H1 (cell line): ENCODE measurements at regions of chr12 and their contacts with region 1.

Region 1: GRCh38 chr12:55738123-55739024 is 4.5 kb upstream of the GDF11 start:
- DNase-seq: peak in 1 of 2 experiments; percentile 88
- H3K4me3 ChIP-seq: peak overlapping the region; percentile 45 to 65 (median 56)
- H3K27ac ChIP-seq: peak overlapping the region; percentile 46; the same call in 1 of the 2 replicates
- H3K4me1 ChIP-seq: peaks cover 2 to 23% (median 10%) of the 10 kb centered on the region in 4 experiments; a peak in 6 of 7 replicates
- H3K27me3 ChIP-seq: no peaks in the 10 kb centered on the region
- CTCF ChIP-seq: peak in 2 of 3 experiments; percentile 70 to 84; a peak in 3 of 4 replicates
- EP300 ChIP-seq: no peak
- POLR2A ChIP-seq: peak in 1 of 2 experiments; percentile 61; a peak in 2 of 3 replicates
- RAD21 ChIP-seq: peak; percentile 91 to 92

Region 2: DNA sequence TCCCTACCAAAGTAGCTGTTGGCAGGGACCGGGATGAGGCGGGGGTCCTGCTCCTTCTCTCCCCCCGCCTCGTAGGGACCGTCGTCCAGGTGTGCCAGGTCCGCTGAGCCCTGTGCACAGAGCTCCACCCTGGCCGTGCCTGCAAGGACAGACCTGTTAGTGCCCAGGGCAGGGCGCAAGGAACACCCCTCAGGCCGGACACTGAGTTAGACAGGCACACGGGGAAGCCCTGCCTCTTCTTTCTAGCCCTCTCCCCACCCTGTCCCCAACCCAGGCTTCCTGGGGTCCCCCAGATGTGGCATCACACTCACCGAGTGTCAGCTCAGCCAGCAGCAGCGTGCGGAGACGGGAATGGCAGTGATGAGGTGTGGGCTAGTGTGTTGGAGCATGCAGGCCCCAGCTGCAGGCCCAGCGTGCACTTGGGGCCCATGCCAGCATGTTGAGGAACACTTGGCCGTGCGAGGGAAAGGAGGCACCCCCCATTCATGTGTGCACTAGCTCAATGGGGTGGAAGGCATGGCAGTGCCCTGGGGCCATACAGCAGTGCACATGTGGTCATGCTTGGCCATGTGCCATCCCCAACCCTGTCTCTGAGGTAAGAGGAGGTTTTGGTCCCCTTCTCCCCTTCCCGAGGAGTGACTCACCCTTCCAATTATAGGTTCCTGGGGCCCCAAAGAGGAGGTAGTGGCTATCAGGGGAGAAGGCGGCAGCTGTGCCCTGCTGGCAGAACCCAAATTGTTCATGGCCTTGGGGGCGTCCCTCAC is 37.9 kb before region 1 on chr12:
- CTCF ChIA-PET with region 1: interaction called, 32 read pairs
- POLR2A ChIA-PET with region 1: interaction called, 9 read pairs
- DNase-seq: no peak
- H3K4me3 ChIP-seq: no peak overlapping the region
- H3K27ac ChIP-seq: no peak overlapping the region
- H3K4me1 ChIP-seq: no peaks in the 10 kb centered on the region; a peak in 1 of 7 replicates
- H3K27me3 ChIP-seq: no peaks in the 10 kb centered on the region
- CTCF ChIP-seq: no peak
- EP300 ChIP-seq: no peak
- POLR2A ChIP-seq: no peak
- RAD21 ChIP-seq: no peak

Region 3: DNA sequence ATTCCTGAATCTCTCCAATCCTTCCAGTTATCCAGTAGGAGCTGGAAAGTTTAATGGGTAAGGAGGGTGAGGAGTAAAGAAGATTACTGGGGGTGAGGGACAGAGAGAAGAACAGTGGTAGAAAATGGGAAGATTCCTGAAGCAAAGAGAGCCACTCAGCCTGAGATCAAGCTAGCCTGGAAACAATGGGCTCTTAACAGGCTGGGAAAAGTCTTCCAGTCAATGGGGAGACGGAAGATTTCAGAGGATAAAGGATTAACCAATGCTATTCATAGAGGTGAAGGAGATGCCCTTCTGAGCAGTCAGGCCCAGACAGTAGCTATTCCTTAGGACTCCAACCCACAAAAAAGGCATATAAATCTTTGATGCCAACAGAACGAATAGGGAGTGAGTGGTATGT is 19.3 kb after region 1 on chr12:
- CTCF ChIA-PET with region 1: interaction called, 186 read pairs
- POLR2A ChIA-PET with region 1: interaction called, 809 read pairs
- DNase-seq: no peak
- H3K4me3 ChIP-seq: no peak overlapping the region
- H3K27ac ChIP-seq: no peak overlapping the region
- H3K4me1 ChIP-seq: no peaks in the 10 kb centered on the region
- H3K27me3 ChIP-seq: no peaks in the 10 kb centered on the region
- CTCF ChIP-seq: no peak
- EP300 ChIP-seq: no peak
- POLR2A ChIP-seq: peak in 1 of 2 experiments; percentile 50; a peak in 1 of 3 replicates
- RAD21 ChIP-seq: no peak

Region 4: GRCh38 chr12:55789171-55789570 is 50.8 kb after region 1 on chr12:
- CTCF ChIA-PET with region 1: interaction called, 145 read pairs
- POLR2A ChIA-PET with region 1: interaction called, 809 read pairs
- DNase-seq: no peak
- H3K4me3 ChIP-seq: no peak overlapping the region
- H3K27ac ChIP-seq: no peak overlapping the region
- H3K4me1 ChIP-seq: no peaks in the 10 kb centered on the region
- H3K27me3 ChIP-seq: no peaks in the 10 kb centered on the region
- CTCF ChIP-seq: no peak
- EP300 ChIP-seq: no peak
- POLR2A ChIP-seq: no peak
- RAD21 ChIP-seq: no peak

Region 5: GRCh38 chr12:55829967-55830600 is 91.7 kb after region 1 on chr12:
- CTCF ChIA-PET with region 1: interaction called, 224 read pairs
- POLR2A ChIA-PET with region 1: interaction called, 45 read pairs
- DNase-seq: peak in 1 of 2 experiments; percentile 84
- H3K4me3 ChIP-seq: peak overlapping the region; percentile 59 to 97 (median 86)
- H3K27ac ChIP-seq: peak overlapping the region; percentile 92
- H3K4me1 ChIP-seq: peaks cover 1 to 16% (median 6%) of the 10 kb centered on the region in 4 experiments
- H3K27me3 ChIP-seq: no peaks in the 10 kb centered on the region
- CTCF ChIP-seq: 0 out of 4 replicates have a peak, but pooled peaks of 1 of the 3 experiments have one; percentile 2
- EP300 ChIP-seq: no peak
- POLR2A ChIP-seq: peak in 1 of 2 experiments; percentile 53; a peak in 1 of 3 replicates
- RAD21 ChIP-seq: peak in 1 of 2 experiments; percentile 39; a peak in 2 of 4 replicates

Region 6: DNA sequence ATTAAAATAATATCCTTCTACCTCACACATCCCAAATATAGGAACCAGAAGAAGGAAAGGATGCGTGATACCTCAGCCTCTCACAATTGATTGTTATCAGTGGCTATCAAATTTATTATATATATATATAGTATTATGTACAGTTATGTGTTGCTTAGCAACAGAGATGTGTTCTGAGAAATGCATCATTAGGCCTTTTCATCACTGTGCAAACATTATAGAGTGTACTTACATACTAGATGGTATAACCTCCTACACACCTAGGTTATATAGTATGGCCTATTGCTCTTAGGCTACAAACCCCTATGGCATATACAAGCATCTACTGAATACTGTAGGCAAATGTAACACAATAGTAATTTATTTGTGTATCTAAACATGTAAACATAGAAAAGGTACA is 155.3 kb after region 1 on chr12:
- CTCF ChIA-PET with region 1: no interaction called
- POLR2A ChIA-PET with region 1: no interaction called
- DNase-seq: no peak
- H3K4me3 ChIP-seq: no peak overlapping the region
- H3K27ac ChIP-seq: no peak overlapping the region
- H3K4me1 ChIP-seq: no peaks in the 10 kb centered on the region
- H3K27me3 ChIP-seq: no peaks in the 10 kb centered on the region
- CTCF ChIP-seq: no peak
- EP300 ChIP-seq: no peak
- POLR2A ChIP-seq: no peak
- RAD21 ChIP-seq: no peak

Region 7: DNA sequence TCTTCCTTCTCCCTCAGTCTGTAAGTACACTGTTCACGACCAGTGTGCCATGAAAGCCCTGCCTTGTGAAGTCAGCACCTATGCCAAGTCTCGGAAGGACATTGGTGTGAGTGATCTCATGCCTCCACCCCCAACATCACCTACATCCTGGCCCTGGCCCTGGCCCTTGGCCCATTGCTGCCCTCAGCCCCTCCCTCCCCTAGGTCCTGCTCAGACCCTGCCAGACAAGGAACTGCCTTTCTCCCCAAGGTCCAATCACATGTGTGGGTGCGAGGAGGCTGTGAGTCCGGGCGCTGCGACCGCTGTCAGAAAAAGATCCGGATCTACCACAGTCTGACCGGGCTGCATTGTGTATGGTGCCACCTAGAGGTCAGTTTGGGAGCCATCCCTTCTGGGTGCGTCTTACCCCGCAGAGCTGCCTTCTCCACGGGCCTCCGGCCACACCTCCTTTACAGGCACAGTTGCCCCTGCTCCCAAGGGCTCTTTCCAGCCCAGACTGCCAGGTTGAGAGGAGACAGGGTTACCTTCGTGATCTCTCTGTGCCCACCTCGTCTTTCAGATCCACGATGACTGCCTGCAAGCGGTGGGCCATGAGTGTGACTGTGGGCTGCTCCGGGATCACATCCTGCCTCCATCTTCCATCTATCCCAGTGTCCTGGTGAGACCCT is 201.8 kb after region 1 on chr12:
- CTCF ChIA-PET with region 1: interaction called, 15 read pairs
- POLR2A ChIA-PET with region 1: interaction called, 3 read pairs
- DNase-seq: peak; percentile 83 to 95
- H3K4me3 ChIP-seq: no peak overlapping the region; a peak in 1 of 8 replicates
- H3K27ac ChIP-seq: no peak overlapping the region
- H3K4me1 ChIP-seq: peaks cover 0 to 9% (median 2%) of the 10 kb centered on the region in 4 experiments; a peak in 4 of 7 replicates
- H3K27me3 ChIP-seq: peaks cover 0 to 2% (median 0%) of the 10 kb centered on the region in 4 experiments; a peak in 1 of 7 replicates
- CTCF ChIP-seq: peak; percentile 83 to 100 (median 98)
- EP300 ChIP-seq: no peak
- POLR2A ChIP-seq: 0 out of 3 replicates have a peak, but pooled peaks of 1 of the 2 experiments have one; percentile 22
- RAD21 ChIP-seq: peak; percentile 82 to 88

Region 8: GRCh38 chr12:56541631-56542030 is 803.3 kb after region 1 on chr12:
- CTCF ChIA-PET with region 1: no interaction called
- POLR2A ChIA-PET with region 1: no interaction called
- DNase-seq: no peak
- H3K4me3 ChIP-seq: no peak overlapping the region
- H3K27ac ChIP-seq: no peak overlapping the region
- H3K4me1 ChIP-seq: no peaks in the 10 kb centered on the region
- H3K27me3 ChIP-seq: no peaks in the 10 kb centered on the region
- CTCF ChIP-seq: no peak
- EP300 ChIP-seq: no peak
- POLR2A ChIP-seq: no peak
- RAD21 ChIP-seq: no peak